Common myeloid progenitor, CD34-positive (primary cell): ENCODE measurements at regions of chr18 and their contacts with region 1.

Region 1: GRCh38 chr18:76803814-76804213 is 18.5 kb upstream of the ZNF236 start:
- DNase-seq: peak; percentile 60 to 69 (median 69)
- H3K4me3 ChIP-seq: peak overlapping the region in 3 of 7 experiments; percentile 8 to 36 (median 19)
- H3K27ac ChIP-seq: no peak overlapping the region
- H3K4me1 ChIP-seq: peaks cover 3 to 13% (median 7%) of the 10 kb centered on the region in 4 experiments
- H3K27me3 ChIP-seq: peaks cover 0 to 2% (median 0%) of the 10 kb centered on the region in 5 experiments

Region 2: DNA sequence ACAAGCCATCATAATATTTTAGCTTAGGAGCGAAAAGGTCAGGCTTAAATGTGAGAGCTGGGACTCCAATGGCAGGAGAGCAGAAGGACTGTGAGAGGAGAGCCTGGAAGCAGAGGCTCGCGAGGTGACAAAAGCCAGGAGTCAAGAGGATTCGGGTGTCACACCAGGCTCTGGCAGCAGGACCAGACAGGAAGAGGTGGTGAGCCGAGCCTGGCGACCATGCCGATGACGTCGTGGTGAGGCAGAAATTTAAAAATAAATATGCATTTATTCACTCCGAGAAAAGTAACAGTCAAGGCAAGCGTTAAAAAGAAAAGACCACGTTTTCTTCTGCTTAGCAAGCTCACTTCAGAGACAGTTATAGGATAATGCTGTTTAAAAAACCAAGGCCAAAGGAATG is 12.7 kb before region 1 on chr18:
- CTCF ChIA-PET with region 1: interaction called, 22 read pairs
- POLR2A ChIA-PET with region 1: no interaction called
- DNase-seq: no peak
- H3K4me3 ChIP-seq: no peak overlapping the region
- H3K27ac ChIP-seq: no peak overlapping the region
- H3K4me1 ChIP-seq: no peaks in the 10 kb centered on the region
- H3K27me3 ChIP-seq: no peaks in the 10 kb centered on the region

Region 3: DNA sequence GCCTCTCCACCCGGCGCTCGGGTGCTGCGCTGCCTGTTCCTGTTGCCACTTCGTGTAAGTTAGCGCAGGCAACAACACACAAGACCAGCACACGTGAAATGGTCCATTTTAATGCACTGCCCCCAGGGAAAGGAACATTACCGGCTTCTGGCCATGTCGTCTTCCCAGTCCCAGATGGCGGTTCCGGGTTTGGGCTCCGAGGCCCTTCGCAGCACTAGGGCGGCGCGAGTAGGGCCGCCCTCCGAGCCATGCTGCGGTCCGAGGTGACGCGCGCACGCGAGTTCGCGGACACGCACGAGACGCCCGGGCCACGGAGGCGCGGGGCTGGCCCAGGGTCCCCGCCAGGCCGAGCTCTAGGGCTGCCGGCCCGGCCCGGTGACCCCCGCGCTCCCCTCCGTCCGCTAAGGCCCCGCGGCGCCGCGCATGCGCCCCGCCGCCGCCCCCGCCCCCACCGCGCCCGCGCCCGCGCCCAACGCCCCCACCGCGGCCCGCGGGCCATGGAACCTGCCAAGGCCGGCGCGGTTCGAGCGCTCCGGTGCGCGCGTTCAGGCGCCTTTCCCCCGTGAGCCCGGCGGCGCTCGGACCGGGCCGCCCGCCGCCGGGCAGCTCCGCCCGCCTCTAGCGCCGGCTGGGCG is 18.2 kb after region 1 on chr18:
- CTCF ChIA-PET with region 1: interaction called, 37 read pairs
- POLR2A ChIA-PET with region 1: no interaction called
- DNase-seq: peak; percentile 69 to 80 (median 77)
- H3K4me3 ChIP-seq: peak overlapping the region; percentile 79 to 98 (median 95)
- H3K27ac ChIP-seq: peak overlapping the region; percentile 89 to 93
- H3K4me1 ChIP-seq: peaks cover 11 to 29% (median 23%) of the 10 kb centered on the region in 4 experiments
- H3K27me3 ChIP-seq: no peaks in the 10 kb centered on the region

Region 4: GRCh38 chr18:76875390-76876325 is 71.8 kb after region 1 on chr18:
- CTCF ChIA-PET with region 1: interaction called, 13 read pairs
- POLR2A ChIA-PET with region 1: interaction called, 3 read pairs
- DNase-seq: peak; percentile 44 to 66 (median 60)
- H3K4me3 ChIP-seq: no peak overlapping the region
- H3K27ac ChIP-seq: no peak overlapping the region
- H3K4me1 ChIP-seq: no peaks in the 10 kb centered on the region
- H3K27me3 ChIP-seq: no peaks in the 10 kb centered on the region

Region 5: GRCh38 chr18:76982841-76983587 is 179.2 kb after region 1 on chr18:
- CTCF ChIA-PET with region 1: interaction called, 12 read pairs
- POLR2A ChIA-PET with region 1: no interaction called
- DNase-seq: peak; percentile 75 to 88 (median 85)
- H3K4me3 ChIP-seq: peak overlapping the region in 2 of 7 experiments; percentile 32 to 46
- H3K27ac ChIP-seq: no peak overlapping the region
- H3K4me1 ChIP-seq: peaks cover 0 to 10% (median 4%) of the 10 kb centered on the region in 4 experiments
- H3K27me3 ChIP-seq: no peaks in the 10 kb centered on the region